ENCODE measurements at regions of chr11 and their contacts with region 1.

Region 1: DNA sequence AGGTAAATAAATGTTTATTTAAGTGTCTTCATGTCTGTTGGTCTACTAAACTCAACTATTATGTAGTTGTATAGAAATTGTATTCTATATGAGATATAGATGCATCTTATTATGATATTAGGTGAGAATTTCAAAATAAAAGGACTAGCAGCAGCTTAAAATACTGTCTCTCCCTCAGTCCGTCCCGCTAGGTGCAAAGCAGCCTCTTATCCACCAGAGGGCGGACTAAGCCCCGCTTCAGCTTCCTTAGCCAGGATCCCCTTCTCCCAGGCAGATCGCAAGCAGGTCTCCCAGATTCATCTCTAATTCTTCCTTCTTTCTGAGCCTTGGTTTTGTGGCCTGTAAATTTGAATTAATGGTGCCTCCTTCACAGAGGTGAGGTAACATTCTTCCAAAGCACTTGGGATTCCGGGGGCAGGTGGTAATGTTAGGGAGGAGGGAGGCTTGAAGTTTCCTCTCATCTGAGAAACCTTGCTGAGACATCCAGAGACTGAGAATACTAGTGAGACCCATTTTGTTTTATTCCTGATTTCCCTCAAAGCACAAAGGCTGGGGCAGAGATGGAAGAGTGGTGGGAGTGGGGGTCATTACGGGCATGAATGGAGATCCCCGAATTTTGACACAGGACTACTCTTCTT is 13.5 kb upstream of the INSC start:
- DNase-seq: peak; percentile 67
- ATAC-seq: peak; percentile 78
- H3K4me3 Mint-ChIP-seq: no peak overlapping the region
- H3K27ac Mint-ChIP-seq: no peak overlapping the region
- H3K4me1 Mint-ChIP-seq: no peaks in the 10 kb centered on the region
- H3K27me3 Mint-ChIP-seq: peaks cover 27% of the 10 kb centered on the region

Region 2: GRCh38 chr11:15006139-15006759 is 94.9 kb before region 1 on chr11:
- CTCF ChIA-PET with region 1: interaction called, 11 read pairs
- POLR2A ChIA-PET with region 1: no interaction called
- DNase-seq: no peak
- ATAC-seq: peak; percentile 65
- H3K4me3 Mint-ChIP-seq: no peak overlapping the region
- H3K27ac Mint-ChIP-seq: no peak overlapping the region
- H3K4me1 Mint-ChIP-seq: no peaks in the 10 kb centered on the region
- H3K27me3 Mint-ChIP-seq: peaks cover 35% of the 10 kb centered on the region

Region 3: GRCh38 chr11:15113381-15113780 is 12.2 kb after region 1 on chr11:
- CTCF ChIA-PET with region 1: interaction called, 38 read pairs
- POLR2A ChIA-PET with region 1: interaction called, 3 read pairs
- DNase-seq: peak; percentile 40
- ATAC-seq: peak; percentile 55
- H3K4me3 Mint-ChIP-seq: no peak overlapping the region
- H3K27ac Mint-ChIP-seq: no peak overlapping the region
- H3K4me1 Mint-ChIP-seq: peaks cover 29% of the 10 kb centered on the region
- H3K27me3 Mint-ChIP-seq: peaks cover 25% of the 10 kb centered on the region

Region 4: GRCh38 chr11:15127341-15127740 is 26.1 kb after region 1 on chr11:
- CTCF ChIA-PET with region 1: interaction called, 15 read pairs
- POLR2A ChIA-PET with region 1: no interaction called
- DNase-seq: no peak
- ATAC-seq: no peak
- H3K4me3 Mint-ChIP-seq: no peak overlapping the region
- H3K27ac Mint-ChIP-seq: no peak overlapping the region
- H3K4me1 Mint-ChIP-seq: no peaks in the 10 kb centered on the region
- H3K27me3 Mint-ChIP-seq: peaks cover 47% of the 10 kb centered on the region

Region 5: GRCh38 chr11:15195454-15196200 is 94.4 kb after region 1 on chr11:
- CTCF ChIA-PET with region 1: interaction called, 15 read pairs
- POLR2A ChIA-PET with region 1: no interaction called
- DNase-seq: no peak
- ATAC-seq: no peak
- H3K4me3 Mint-ChIP-seq: no peak overlapping the region
- H3K27ac Mint-ChIP-seq: no peak overlapping the region
- H3K4me1 Mint-ChIP-seq: no peaks in the 10 kb centered on the region
- H3K27me3 Mint-ChIP-seq: peaks cover 4% of the 10 kb centered on the region

Measured in activated CD8-positive, alpha-beta T cell treated with anti-CD3 and anti-CD28 coated beads, Interleukin-2, amount 10 ng/mL, durations not matched to agents 7 days and 5 days (primary cell).